ENCODE measurements at regions of chr19 and their contacts with region 1.

Region 1: GRCh38 chr19:9323919-9324583 is at the start of gene ZNF559:
- DNase-seq: peak; percentile 90 to 95
- H3K4me3 ChIP-seq: peak within 1 kb of the TSS; percentile 62
- H3K4me1 ChIP-seq: peaks cover 3% of the 10 kb centered on the region; the same call in 1 of the 2 replicates
- H3K27me3 ChIP-seq: no peaks in the 10 kb centered on the region

Region 2: GRCh38 chr19:9597027-9597426 is 273.0 kb after region 1 on chr19:
- in situ Hi-C with region 1: no loop called
- DNase-seq: no peak
- H3K4me3 ChIP-seq: no peak overlapping the region
- H3K4me1 ChIP-seq: no peaks in the 10 kb centered on the region
- H3K27me3 ChIP-seq: no peaks in the 10 kb centered on the region

Region 3: DNA sequence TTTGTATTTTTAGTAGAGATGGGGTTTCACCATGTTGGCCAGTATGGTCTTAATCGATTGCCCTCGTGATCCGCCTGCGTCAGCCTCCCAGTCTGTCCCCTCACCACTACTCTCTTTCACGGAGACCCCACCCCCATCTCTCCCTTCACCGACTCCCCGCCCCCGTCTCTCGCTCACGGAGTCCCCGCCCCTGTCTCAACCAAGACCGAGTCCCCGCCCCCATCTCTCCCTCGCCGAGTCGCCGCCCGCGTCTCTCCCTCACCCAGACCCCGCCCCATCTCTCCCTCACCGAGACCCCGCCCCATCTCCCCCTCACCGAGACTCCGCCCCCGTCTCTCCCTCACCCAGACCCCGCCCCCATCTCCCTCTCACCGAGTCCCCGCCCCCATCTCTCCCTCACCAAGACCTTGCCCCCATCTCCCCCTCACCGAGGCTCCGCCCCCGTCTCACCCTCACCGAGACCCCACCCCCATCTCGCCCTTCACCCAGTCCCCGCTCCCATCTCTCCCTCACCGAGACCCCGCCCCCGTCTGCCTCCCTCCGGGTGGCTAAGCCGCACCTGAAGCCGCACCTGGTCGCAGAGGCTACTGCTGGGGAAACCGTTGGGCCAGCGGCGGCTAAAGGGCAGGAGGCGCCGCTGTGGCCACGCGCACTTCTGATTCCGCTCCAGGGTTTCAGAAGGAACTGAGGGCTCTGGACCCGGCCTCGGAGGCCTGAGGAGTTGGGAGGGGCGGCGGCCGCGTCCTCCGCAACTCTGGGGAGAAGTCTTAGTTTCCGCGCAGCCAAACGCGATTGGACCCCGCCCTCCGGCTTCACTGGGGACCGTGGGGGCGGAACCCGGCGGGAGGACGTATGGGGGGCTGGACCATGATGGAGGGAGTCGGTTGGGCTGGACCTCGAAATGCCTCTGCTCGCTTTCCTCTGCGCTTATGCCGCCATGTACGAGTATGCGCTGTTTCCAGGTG is 461.6 kb after region 1 on chr19:
- in situ Hi-C with region 1: loop called (anchors 25 kb)
- DNase-seq: peak; percentile 90 to 100
- H3K4me3 ChIP-seq: peak overlapping the region; percentile 59
- H3K4me1 ChIP-seq: no peaks in the 10 kb centered on the region
- H3K27me3 ChIP-seq: no peaks in the 10 kb centered on the region